Mammary epithelial cell (primary cell): ENCODE measurements at regions of chr10 and their contacts with region 1.

Region 1: GRCh38 chr10:123132576-123133477 is 2.9 kb upstream of the HMX3 start:
- DNase-seq: peak; percentile 70
- H3K4me3 ChIP-seq: peak overlapping the region in 2 of 3 experiments; percentile 5 to 14
- H3K27ac ChIP-seq: no peak overlapping the region
- H3K4me1 ChIP-seq: peaks cover 30% of the 10 kb centered on the region
- H3K27me3 ChIP-seq: peaks cover 43% of the 10 kb centered on the region
- CTCF ChIP-seq: peak; percentile 86 to 92

Region 2: GRCh38 chr10:123096452-123096851 is 36.4 kb before region 1 on chr10:
- CTCF ChIA-PET with region 1: no interaction called
- dilution Hi-C with region 1: no loop called
- in situ Hi-C with region 1: no loop called
- intact Hi-C with region 1: no loop called
- DNase-seq: no peak
- H3K4me3 ChIP-seq: no peak overlapping the region
- H3K27ac ChIP-seq: no peak overlapping the region
- H3K4me1 ChIP-seq: no peaks in the 10 kb centered on the region
- H3K27me3 ChIP-seq: no peaks in the 10 kb centered on the region
- CTCF ChIP-seq: no peak

Region 3: DNA sequence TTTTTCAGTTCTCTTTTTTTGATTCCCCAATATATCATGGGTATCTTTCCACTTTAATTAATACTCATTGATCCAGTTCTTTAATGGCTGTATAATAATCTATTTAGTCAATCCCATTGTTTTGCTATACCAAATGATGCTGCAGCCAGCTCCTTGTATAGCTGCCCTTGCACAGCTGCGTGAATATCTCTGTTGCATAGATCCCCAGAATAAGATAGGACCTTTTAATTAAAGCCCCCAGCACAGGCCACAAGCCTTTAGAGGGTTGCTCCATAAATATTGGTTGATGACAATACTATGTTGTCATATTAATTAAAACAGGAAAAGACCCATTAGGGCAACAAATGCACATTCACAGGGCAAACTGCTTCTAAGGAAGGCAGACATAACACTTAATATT is 79.2 kb after region 1 on chr10:
- CTCF ChIA-PET with region 1: interaction called, 19 read pairs
- dilution Hi-C with region 1: no loop called
- in situ Hi-C with region 1: no loop called
- intact Hi-C with region 1: no loop called
- DNase-seq: no peak
- H3K4me3 ChIP-seq: no peak overlapping the region
- H3K27ac ChIP-seq: no peak overlapping the region
- H3K4me1 ChIP-seq: no peaks in the 10 kb centered on the region
- H3K27me3 ChIP-seq: no peaks in the 10 kb centered on the region
- CTCF ChIP-seq: no peak

Region 4: DNA sequence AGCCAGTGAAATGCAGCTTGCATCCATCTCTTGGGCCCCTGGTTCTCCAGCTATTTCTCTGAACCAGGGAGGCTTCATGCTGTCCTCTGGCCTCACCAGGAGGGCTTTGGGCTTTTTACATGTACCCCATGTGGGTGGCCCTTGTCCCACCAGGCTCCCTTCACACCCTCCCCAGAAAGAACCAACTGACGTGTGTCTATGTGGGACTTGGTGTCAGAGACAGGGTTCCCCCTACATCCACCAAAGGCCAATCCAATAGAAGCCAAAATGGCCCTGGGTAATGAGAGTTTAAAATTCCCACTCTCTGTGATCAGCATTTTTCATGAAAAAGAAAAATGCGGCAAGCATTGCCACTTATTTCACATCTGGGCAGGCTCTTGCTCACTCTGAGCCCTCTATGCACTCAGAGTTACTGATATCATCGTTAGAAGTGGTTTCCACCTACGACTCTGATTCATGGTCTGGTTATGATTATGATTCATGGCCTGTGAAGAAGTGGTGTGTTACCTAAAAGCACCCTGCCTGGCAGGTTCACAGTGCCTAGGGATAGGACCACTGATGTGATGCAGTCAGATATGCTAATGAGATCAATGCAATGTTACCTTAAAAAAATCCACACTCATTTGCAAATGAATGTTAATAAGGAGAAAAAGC is 154.9 kb after region 1 on chr10:
- CTCF ChIA-PET with region 1: no interaction called
- dilution Hi-C with region 1: no loop called
- in situ Hi-C with region 1: no loop called
- intact Hi-C with region 1: loop called (anchors 2 kb)
- DNase-seq: peak; percentile 96
- H3K4me3 ChIP-seq: no peak overlapping the region
- H3K27ac ChIP-seq: no peak overlapping the region
- H3K4me1 ChIP-seq: peaks cover 6% of the 10 kb centered on the region
- H3K27me3 ChIP-seq: no peaks in the 10 kb centered on the region
- CTCF ChIP-seq: no peak

Region 5: DNA sequence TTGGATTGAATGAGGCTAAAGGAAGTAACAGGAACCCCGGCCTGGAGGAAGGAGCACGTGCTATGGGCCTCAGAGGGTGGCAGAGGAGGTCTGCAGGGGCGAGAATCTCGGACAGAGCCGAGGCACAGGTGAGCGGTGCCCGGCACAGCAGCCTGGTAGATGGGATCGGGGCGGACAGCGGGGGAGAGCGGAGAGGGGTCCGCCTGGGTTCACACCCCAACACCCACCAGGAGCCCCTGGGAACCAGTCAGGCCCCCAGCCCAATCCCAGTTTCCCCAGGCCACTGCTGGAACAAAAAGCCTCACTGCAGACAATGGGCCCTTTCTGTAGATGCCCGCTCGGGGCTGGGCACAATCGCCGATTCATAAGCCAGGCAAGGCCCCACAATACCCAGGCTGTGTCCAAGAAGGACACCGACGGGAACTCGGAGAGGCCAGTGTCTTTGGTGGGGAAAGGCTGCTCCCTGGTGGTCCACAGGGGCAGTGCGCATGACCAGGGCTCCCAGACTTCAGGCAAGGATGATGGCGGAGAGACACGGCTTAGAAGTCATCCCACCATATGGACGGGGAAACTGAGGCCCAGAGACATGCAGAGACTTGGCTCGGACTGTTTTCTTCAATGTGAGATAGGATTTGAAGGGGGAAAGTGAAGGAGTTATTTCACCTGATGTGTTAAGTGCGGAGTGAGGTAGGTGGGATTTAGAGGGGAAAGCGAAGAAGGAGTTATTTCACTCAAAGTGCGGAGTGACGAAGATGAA is 426.4 kb after region 1 on chr10:
- CTCF ChIA-PET with region 1: interaction called, 3 read pairs
- dilution Hi-C with region 1: loop called (anchors 25 kb)
- in situ Hi-C with region 1: loop called in 1 of 2 experiments (anchors 25 kb)
- intact Hi-C with region 1: loop called (anchors 1 kb)
- DNase-seq: peak; percentile 34
- H3K4me3 ChIP-seq: no peak overlapping the region
- H3K27ac ChIP-seq: no peak overlapping the region
- H3K4me1 ChIP-seq: no peaks in the 10 kb centered on the region
- H3K27me3 ChIP-seq: no peaks in the 10 kb centered on the region
- CTCF ChIP-seq: peak; percentile 91 to 98

Region 6: GRCh38 chr10:123967396-123968243 is 834.8 kb after region 1 on chr10:
- CTCF ChIA-PET with region 1: no interaction called
- dilution Hi-C with region 1: loop called (anchors 10 kb)
- in situ Hi-C with region 1: loop called in 1 of 2 experiments (anchors 25 kb)
- intact Hi-C with region 1: no loop called
- DNase-seq: peak; percentile 16
- H3K4me3 ChIP-seq: no peak overlapping the region
- H3K27ac ChIP-seq: no peak overlapping the region
- H3K4me1 ChIP-seq: no peaks in the 10 kb centered on the region
- H3K27me3 ChIP-seq: peaks cover 5% of the 10 kb centered on the region
- CTCF ChIP-seq: peak; percentile 80 to 97